ENCODE measurements at regions of chr11 and their contacts with region 1.

Region 1: GRCh38 chr11:122853971-122854446 is 15.7 kb downstream of the CRTAM start:
- DNase-seq: no peak

Region 2: GRCh38 chr11:122578168-122578825 is 275.7 kb before region 1 on chr11:
- intact Hi-C with region 1: loop called (anchors 2 kb)
- DNase-seq: no peak

Region 3: DNA sequence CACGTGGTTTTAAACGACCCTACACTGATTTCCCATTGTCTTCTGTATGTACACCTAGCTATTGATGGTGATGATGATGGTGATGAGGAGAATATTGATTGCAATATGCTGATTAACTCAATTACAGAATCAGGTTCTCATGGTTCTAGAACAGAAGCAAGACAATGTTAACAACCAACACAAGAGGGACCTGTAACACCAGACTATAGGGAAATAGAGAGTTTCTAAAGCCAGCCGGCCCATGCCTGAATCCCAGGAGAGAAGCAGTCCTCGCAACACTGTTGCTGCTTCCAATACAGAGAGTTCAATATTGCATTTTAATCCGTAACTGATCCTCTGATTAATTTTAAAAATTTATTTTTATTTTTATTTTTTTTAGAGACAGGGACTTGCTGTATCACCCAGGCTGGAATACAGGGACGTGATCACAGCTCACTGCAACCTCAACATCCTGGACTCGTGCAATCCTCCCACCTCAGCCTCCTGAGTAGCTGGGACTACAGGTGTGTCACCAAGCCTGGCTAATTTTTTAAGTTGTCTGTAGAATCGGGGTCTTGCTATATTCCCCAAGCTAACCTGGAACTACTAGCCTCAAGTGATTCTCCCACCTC is 220.7 kb before region 1 on chr11:
- intact Hi-C with region 1: loop called (anchors 5 kb)
- DNase-seq: peak; percentile 68

Region 4: DNA sequence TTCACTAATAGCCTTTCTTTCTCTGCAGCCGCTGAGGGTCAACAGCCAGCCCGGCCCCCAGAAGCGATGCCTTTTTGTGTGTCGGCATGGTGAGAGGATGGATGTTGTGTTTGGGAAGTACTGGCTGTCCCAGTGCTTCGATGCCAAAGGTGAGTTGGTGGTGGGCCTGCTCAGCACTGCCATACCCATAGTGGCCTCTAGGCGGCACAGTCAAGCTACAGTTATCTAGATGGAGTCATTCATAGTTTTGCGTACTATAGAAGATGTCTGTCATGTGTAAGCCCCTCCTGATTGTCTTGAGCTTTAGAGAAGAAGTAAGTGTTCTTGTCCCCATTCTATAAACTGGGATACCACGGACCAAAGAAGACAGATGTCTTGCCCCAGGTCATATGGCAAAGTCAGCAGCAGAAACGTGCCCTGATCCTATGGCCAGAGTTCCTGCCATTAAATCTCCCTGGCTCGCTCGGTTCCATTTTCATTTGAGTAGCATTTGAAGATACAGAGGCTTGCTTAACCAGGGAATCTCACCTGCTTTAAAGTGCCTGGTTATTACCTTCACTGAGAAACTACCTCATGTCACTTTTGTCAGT is 57.8 kb before region 1 on chr11:
- intact Hi-C with region 1: loop called (anchors 2 kb)
- DNase-seq: no peak